ENCODE measurements at regions of chr9 and their contacts with region 1.

Region 1: GRCh38 chr9:127869310-127870152 is 7.9 kb downstream of the AK1 start:
- DNase-seq: peak; percentile 51 to 89 (median 81)
- ATAC-seq: peak; percentile 71
- H3K4me3 ChIP-seq: no peak overlapping the region
- H3K4me3 Mint-ChIP-seq: no peak overlapping the region
- H3K27ac ChIP-seq: no peak overlapping the region
- H3K27ac Mint-ChIP-seq: no peak overlapping the region
- H3K4me1 ChIP-seq: peaks cover 17% of the 10 kb centered on the region
- H3K4me1 Mint-ChIP-seq: peaks cover 17% of the 10 kb centered on the region
- H3K27me3 ChIP-seq: no peaks in the 10 kb centered on the region
- H3K27me3 Mint-ChIP-seq: no peaks in the 10 kb centered on the region
- CTCF ChIP-seq: peak; percentile 74

Region 2: DNA sequence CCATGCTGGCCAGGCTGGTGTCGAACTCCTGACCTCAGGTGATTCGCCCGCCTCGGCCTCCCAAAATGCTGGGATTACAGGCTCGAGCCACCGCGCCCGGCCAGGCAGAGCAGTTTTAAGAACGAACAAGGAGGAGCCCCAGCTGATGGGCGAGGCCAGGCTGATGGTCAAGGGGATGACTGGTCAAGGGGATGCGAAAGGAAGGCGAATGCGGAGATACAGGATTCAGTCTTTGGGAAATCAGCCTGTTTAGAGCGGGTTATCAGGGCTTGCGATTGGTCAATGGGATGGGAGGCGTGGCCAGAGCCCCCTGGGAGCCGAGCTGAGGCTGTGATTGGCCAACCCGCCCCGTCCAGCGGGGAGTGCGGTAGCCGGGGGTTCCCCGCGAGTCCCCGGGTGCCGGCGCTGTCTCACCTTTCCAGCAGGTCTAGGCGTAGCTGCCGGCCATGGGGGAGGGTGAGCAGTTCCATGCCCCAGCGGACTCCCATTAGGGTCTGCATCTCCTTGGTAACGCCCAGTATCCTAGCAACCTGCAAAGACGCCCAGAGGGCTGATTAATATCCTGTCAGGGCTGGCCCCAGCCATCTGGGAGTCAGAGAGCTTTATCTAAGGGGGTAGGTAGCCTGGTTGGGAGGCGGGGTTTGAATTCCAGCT is 127.0 kb before region 1 on chr9:
- CTCF ChIA-PET with region 1: interaction called, 10 read pairs
- POLR2A ChIA-PET with region 1: interaction called, 3 read pairs
- intact Hi-C with region 1: no loop called
- DNase-seq: no peak
- ATAC-seq: no peak
- H3K4me3 ChIP-seq: no peak overlapping the region
- H3K4me3 Mint-ChIP-seq: no peak overlapping the region
- H3K27ac ChIP-seq: no peak overlapping the region
- H3K27ac Mint-ChIP-seq: no peak overlapping the region
- H3K4me1 ChIP-seq: peaks cover 13% of the 10 kb centered on the region
- H3K4me1 Mint-ChIP-seq: peaks cover 15% of the 10 kb centered on the region
- H3K27me3 ChIP-seq: no peaks in the 10 kb centered on the region
- H3K27me3 Mint-ChIP-seq: no peaks in the 10 kb centered on the region
- CTCF ChIP-seq: no peak

Region 3: GRCh38 chr9:127785023-127785932 is 84.3 kb before region 1 on chr9:
- CTCF ChIA-PET with region 1: interaction called, 85 read pairs
- POLR2A ChIA-PET with region 1: interaction called, 4 read pairs
- intact Hi-C with region 1: loop called (anchors 1 kb)
- DNase-seq: peak; percentile 85 to 97 (median 91)
- ATAC-seq: peak; percentile 53
- H3K4me3 ChIP-seq: peak overlapping the region; percentile 49 to 82
- H3K4me3 Mint-ChIP-seq: peak overlapping the region; percentile 89
- H3K27ac ChIP-seq: peak overlapping the region; percentile 73 to 94
- H3K27ac Mint-ChIP-seq: peak overlapping the region; percentile 96
- H3K4me1 ChIP-seq: peaks cover 66% of the 10 kb centered on the region
- H3K4me1 Mint-ChIP-seq: peaks cover 60% of the 10 kb centered on the region
- H3K27me3 ChIP-seq: no peaks in the 10 kb centered on the region
- H3K27me3 Mint-ChIP-seq: no peaks in the 10 kb centered on the region
- CTCF ChIP-seq: peak; percentile 74

Region 4: DNA sequence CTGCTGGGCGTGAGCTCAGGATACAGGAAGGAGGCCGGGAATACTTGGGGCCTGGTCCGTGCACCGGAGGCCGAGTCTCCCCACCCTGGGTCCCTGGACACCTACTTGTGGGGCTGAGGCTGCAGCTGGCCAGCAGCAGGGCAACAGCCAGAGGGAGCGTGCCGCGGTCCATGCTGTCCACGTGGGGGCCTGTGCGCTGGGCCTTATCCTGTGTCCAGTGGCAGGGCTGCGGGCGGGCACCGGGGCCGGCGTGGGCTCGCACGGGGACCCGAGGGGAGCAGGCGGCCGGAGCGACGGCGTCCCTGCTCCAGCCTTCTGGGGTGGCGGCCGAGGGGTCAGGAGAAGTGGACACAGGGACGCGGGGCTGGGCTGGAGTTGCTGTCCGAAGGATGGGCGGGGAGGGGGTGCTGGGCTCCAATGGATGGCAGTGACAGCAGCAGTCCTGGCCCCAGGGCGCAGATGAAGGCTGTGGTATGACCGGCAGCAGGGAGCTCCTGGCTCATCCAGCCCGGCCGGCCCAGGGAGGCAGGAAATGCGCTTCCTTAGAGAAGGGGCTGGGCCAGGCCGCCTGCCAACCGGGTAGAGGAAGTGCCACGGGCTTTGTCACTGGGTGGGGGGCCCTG is 15.2 kb before region 1 on chr9 and contains the start of gene ENG:
- CTCF ChIA-PET with region 1: interaction called, 44 read pairs
- POLR2A ChIA-PET with region 1: no interaction called
- intact Hi-C with region 1: no loop called
- DNase-seq: peak in 1 of 9 experiments; percentile 50
- ATAC-seq: peak; percentile 51
- H3K4me3 ChIP-seq: peak within 1 kb of the TSS; percentile 57 to 60
- H3K4me3 Mint-ChIP-seq: peak within 1 kb of the TSS; percentile 84
- H3K27ac ChIP-seq: peak within 1 kb of the TSS; percentile 45 to 71
- H3K27ac Mint-ChIP-seq: peak within 1 kb of the TSS; percentile 87
- H3K4me1 ChIP-seq: peaks cover 35% of the 10 kb centered on the region
- H3K4me1 Mint-ChIP-seq: peaks cover 33% of the 10 kb centered on the region
- H3K27me3 ChIP-seq: no peaks in the 10 kb centered on the region
- H3K27me3 Mint-ChIP-seq: no peaks in the 10 kb centered on the region
- CTCF ChIP-seq: no peak
- total RNA-seq, gene ENG: 2.6 to 3.0 TPM

Region 5: GRCh38 chr9:127910613-127911205 is 41.2 kb after region 1 on chr9:
- CTCF ChIA-PET with region 1: interaction called, 14 read pairs
- POLR2A ChIA-PET with region 1: interaction called, 4 read pairs
- intact Hi-C with region 1: no loop called
- DNase-seq: peak in 1 of 9 experiments; percentile 42
- ATAC-seq: no peak
- H3K4me3 ChIP-seq: no peak overlapping the region
- H3K4me3 Mint-ChIP-seq: no peak overlapping the region
- H3K27ac ChIP-seq: no peak overlapping the region
- H3K27ac Mint-ChIP-seq: peak overlapping the region; percentile 60
- H3K4me1 ChIP-seq: peaks cover 27% of the 10 kb centered on the region
- H3K4me1 Mint-ChIP-seq: peaks cover 43% of the 10 kb centered on the region
- H3K27me3 ChIP-seq: no peaks in the 10 kb centered on the region
- H3K27me3 Mint-ChIP-seq: no peaks in the 10 kb centered on the region
- CTCF ChIP-seq: peak; percentile 17

Measured in CD8-positive, alpha-beta T cell (primary cell).